Activated CD4-positive, alpha-beta T cell treated with anti-CD3 and anti-CD28 coated beads for 36 hours (primary cell): ENCODE measurements at regions of chr6 and their contacts with region 1.

Region 1: DNA sequence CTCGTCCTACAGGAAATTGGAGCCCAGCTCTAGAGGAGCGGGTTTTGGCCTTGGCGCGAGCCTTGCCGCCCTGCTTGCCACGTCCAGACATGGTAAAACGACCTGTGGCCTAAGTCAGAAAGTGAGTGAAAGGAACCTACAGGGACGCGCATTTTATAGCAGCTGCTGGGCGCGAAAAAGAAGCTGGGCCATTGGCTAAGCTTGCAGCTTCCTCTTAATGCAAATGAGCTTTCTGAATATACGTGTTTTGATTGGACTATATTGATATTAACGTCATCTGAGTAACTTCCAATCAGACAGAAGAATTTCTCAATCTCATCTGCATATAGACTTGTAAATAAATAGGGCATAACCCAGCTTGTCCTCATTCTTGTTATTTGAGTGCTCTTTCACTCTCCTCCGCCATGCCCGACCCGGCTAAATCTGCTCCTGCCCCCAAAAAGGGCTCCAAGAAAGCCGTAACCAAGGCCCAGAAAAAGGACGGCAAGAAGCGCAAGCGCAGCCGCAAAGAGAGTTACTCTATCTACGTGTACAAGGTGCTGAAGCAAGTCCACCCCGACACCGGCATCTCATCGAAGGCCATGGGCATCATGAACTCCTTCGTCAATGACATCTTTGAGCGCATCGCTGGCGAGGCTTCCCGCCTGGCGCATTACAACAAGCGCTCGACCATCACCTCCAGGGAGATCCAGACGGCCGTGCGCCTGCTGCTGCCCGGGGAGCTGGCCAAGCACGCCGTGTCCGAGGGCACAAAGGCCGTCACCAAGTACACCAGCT is 18.9 kb downstream of the OR2B2 start:
- DNase-seq: peak; percentile 94
- ATAC-seq: peak; percentile 64
- H3K4me3 Mint-ChIP-seq: no peak overlapping the region
- H3K27ac Mint-ChIP-seq: no peak overlapping the region
- H3K4me1 Mint-ChIP-seq: peaks cover 31% of the 10 kb centered on the region
- H3K27me3 Mint-ChIP-seq: no peaks in the 10 kb centered on the region

Region 2: DNA sequence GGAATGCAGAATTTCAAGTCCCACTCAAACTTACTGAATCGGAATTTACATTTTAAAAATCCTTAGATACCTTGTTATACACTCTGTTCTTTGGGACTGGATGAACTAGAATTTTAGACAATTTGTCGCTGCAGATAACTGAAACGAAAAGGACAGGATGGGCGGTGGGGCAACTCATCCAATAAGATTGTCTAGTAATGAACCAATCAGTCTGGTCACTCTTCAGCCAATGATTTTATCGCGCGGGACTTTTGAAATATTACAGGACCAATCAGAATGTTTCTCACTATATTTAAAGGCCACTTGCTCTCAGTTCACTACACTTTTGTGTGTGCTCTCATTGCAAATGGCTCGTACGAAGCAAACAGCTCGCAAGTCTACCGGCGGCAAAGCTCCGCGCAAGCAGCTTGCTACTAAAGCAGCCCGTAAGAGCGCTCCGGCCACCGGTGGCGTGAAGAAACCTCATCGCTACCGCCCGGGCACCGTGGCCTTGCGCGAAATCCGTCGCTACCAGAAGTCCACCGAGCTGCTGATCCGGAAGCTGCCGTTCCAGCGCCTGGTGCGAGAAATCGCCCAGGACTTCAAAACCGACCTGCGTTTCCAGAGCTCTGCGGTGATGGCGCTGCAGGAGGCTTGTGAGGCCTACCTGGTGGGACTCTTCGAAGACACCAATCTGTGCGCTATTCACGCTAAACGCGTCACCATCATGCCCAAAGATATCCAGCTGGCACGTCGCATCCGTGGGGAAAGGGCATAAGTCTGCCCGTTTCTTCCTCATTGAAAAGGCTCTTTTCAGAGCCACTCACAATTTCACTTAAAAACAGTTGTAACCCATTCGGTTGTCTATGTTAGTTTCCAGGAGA is 1848.0 kb before region 1 on chr6:
- CTCF ChIA-PET with region 1: no interaction called
- POLR2A ChIA-PET with region 1: interaction called, 4 read pairs
- intact Hi-C with region 1: loop called in 1 of 2 experiments (anchors 5 kb)
- DNase-seq: peak; percentile 83
- ATAC-seq: peak; percentile 63
- H3K4me3 Mint-ChIP-seq: peak overlapping the region; percentile 79
- H3K27ac Mint-ChIP-seq: peak overlapping the region; percentile 99
- H3K4me1 Mint-ChIP-seq: peaks cover 18% of the 10 kb centered on the region
- H3K27me3 Mint-ChIP-seq: no peaks in the 10 kb centered on the region

Region 3: GRCh38 chr6:27188885-27189418 is 704.3 kb before region 1 on chr6:
- CTCF ChIA-PET with region 1: interaction called, 3 read pairs
- POLR2A ChIA-PET with region 1: no interaction called
- intact Hi-C with region 1: loop called in 1 of 2 experiments (anchors 1 kb)
- DNase-seq: peak; percentile 75
- ATAC-seq: peak; percentile 89
- H3K4me3 Mint-ChIP-seq: peak overlapping the region; percentile 81
- H3K27ac Mint-ChIP-seq: peak overlapping the region; percentile 76
- H3K4me1 Mint-ChIP-seq: peaks cover 10% of the 10 kb centered on the region
- H3K27me3 Mint-ChIP-seq: peaks cover 2% of the 10 kb centered on the region

Region 4: DNA sequence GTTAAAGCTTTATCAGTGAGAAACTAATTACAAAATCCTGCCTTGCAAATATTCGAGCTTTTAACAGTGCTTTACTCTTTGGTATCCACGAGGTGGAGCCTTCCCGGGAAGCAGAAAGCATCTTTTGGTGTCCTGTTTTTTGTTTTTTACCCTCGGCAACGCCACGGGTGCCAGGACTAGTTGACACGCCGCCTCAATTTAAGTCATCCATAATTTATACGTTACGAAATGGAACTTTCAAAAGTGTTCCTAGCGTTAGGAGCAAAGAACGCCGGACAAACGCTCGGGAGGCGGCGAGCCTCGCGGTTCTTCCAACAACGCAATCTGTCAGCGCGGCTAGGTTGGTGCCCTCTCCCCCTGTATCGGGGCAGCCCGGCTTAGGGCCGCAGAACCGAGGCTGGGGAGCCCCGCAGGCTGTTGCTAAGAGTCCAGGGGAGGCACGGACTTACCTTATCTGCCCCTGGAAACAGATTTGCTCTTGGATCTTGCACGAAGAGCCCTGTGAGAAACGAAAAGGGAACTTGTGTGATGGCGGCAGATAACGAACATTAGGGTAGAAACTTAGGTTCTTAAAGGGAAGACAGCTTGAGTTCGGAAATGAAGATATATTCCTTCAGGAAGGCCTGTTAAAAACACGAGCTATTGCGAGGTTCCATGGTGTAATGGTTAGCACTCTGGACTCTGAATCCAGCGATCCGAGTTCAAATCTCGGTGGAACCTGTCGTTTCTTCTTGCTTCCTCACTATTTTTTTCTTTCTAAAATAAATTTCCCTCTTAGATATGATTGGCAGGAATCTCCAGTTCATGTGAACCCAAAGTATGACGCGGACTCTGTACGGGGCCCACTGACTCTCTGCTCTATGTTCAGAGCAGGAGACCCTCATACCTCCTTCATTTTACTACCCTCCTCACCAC is 374.1 kb before region 1 on chr6:
- CTCF ChIA-PET with region 1: interaction called, 3 read pairs
- POLR2A ChIA-PET with region 1: interaction called, 4 read pairs
- intact Hi-C with region 1: loop called in 1 of 2 experiments (anchors 2 kb)
- DNase-seq: peak; percentile 75
- ATAC-seq: peak; percentile 83
- H3K4me3 Mint-ChIP-seq: peak overlapping the region; percentile 80
- H3K27ac Mint-ChIP-seq: peak overlapping the region; percentile 80
- H3K4me1 Mint-ChIP-seq: peaks cover 15% of the 10 kb centered on the region
- H3K27me3 Mint-ChIP-seq: peaks cover 16% of the 10 kb centered on the region

Region 5: DNA sequence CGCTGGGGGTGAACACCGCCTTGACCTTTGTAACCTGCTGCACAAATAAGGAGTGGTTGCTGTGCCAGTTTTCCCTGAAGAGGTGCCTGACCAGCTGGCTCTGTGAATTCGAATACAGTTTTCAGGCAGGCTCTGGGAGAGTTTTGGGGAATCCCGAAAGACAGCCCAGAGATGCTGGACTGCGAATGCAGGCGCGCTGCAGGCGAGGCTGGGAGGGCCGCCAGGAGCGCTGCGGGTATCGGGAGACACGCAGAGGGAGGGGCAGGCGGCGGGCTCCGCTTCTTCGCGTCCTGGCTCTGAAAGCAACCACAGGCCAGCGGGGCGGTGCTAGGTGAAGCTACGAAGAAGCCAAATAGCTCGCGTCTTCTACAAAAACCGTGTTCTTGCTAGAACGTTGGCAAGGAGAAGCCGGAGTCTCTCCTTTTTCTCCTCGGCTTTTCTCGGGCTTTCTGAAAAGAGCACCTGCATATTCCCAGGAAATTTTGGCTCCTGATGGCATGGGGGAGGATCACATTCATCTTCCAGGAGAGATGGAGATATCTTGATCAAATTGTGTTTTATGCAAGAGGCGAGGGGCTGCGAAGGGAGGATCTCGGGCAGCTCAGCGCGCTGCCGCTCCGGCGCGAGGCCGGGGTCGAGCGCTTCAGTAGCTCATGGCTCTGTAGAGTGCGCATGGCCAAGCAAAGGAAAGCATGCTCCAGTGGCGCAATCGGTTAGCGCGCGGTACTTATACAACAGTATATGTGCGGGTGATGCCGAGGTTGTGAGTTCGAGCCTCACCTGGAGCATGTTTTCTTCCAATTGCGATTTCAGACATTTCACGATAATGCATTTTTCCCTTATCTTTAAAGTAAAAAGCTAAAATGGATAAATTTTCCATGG is 262.3 kb before region 1 on chr6:
- CTCF ChIA-PET with region 1: no interaction called
- POLR2A ChIA-PET with region 1: no interaction called
- intact Hi-C with region 1: no loop called
- DNase-seq: peak; percentile 83
- ATAC-seq: peak; percentile 91
- H3K4me3 Mint-ChIP-seq: peak overlapping the region; percentile 85
- H3K27ac Mint-ChIP-seq: peak overlapping the region; percentile 80
- H3K4me1 Mint-ChIP-seq: peaks cover 7% of the 10 kb centered on the region
- H3K27me3 Mint-ChIP-seq: peaks cover 58% of the 10 kb centered on the region

Region 6: DNA sequence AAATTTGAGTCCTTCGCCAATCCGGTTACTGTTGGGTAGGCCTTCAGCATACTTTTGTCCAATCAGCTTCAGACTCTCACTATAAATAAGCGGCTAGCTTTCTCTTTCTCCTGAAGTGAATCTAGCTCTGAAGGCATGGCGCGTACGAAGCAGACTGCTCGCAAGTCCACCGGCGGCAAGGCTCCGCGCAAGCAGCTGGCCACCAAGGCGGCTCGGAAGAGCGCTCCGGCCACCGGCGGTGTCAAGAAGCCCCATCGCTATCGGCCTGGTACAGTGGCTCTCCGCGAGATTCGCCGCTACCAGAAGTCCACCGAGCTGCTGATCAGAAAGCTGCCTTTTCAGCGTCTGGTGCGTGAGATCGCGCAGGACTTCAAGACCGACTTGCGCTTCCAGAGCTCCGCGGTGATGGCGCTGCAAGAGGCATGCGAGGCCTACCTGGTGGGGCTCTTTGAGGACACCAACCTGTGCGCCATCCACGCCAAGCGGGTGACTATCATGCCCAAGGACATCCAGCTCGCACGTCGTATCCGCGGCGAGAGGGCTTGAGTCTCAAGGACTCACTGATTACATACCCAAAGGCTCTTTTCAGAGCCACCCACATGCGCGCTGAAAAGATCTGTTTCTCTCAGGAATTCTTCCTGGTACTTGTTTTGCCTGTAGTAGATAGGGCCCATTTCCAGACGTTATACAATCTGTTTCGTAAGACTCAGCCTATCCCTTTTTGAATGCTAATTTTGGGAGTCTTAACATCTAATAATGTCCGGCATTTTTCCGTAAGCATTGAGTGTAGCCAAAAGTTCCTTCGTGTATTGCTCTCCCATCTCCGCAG is 83.1 kb before region 1 on chr6:
- CTCF ChIA-PET with region 1: interaction called, 53 read pairs
- POLR2A ChIA-PET with region 1: interaction called, 202 read pairs
- intact Hi-C with region 1: loop called (anchors 1 kb)
- DNase-seq: peak; percentile 83
- ATAC-seq: peak; percentile 33
- H3K4me3 Mint-ChIP-seq: peak overlapping the region; percentile 86
- H3K27ac Mint-ChIP-seq: peak overlapping the region; percentile 95
- H3K4me1 Mint-ChIP-seq: peaks cover 49% of the 10 kb centered on the region
- H3K27me3 Mint-ChIP-seq: no peaks in the 10 kb centered on the region

Region 7: DNA sequence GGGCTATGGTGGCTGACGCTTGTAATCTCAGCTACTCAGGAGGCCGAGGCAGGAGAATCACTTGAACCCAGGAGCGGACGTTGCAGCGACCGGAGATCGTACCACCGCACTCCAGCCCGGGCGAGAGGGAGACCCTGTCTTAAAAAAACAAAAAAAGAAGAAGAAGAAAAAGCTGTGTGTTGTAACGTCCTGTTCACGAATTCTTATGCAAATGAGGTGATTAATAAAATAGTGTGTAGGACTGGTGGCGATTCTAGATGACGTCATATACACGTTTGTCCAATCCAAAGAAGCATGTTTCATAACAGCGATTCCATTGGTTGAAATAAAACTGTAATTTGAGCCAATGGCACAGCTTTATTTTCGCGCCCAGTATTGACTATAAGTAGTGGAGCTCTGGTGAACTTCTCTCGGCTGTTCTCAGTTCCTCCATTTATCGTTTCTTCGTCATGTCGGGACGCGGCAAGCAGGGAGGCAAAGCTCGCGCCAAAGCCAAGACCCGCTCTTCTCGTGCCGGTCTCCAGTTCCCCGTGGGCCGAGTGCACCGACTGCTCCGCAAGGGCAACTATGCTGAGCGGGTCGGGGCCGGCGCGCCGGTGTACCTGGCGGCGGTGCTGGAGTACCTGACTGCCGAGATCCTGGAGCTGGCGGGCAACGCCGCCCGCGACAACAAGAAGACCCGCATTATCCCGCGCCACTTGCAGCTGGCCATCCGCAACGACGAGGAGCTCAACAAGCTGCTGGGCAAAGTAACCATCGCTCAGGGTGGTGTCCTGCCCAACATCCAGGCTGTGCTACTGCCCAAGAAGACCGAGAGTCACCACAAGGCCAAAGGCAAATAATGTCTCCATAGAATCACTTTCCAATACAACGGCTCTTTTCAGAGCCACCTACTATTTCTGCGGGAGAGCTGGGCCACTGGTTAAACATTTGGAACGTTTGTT is 28.1 kb before region 1 on chr6:
- CTCF ChIA-PET with region 1: interaction called, 56 read pairs
- POLR2A ChIA-PET with region 1: interaction called, 775 read pairs
- intact Hi-C with region 1: loop called (anchors 1 kb)
- DNase-seq: peak; percentile 86
- ATAC-seq: peak; percentile 57
- H3K4me3 Mint-ChIP-seq: peak overlapping the region; percentile 94
- H3K27ac Mint-ChIP-seq: peak overlapping the region; percentile 99
- H3K4me1 Mint-ChIP-seq: peaks cover 40% of the 10 kb centered on the region
- H3K27me3 Mint-ChIP-seq: no peaks in the 10 kb centered on the region